ENCODE measurements at regions of chr2 and their contacts with region 1.

Region 1: GRCh38 chr2:192162392-192163042 is 32.2 kb downstream of the TMEFF2 start:
- DNase-seq: peak; percentile 66 to 87
- H3K4me3 ChIP-seq: no peak overlapping the region
- H3K4me1 ChIP-seq: no peaks in the 10 kb centered on the region
- H3K27me3 ChIP-seq: no peaks in the 10 kb centered on the region

Region 2: DNA sequence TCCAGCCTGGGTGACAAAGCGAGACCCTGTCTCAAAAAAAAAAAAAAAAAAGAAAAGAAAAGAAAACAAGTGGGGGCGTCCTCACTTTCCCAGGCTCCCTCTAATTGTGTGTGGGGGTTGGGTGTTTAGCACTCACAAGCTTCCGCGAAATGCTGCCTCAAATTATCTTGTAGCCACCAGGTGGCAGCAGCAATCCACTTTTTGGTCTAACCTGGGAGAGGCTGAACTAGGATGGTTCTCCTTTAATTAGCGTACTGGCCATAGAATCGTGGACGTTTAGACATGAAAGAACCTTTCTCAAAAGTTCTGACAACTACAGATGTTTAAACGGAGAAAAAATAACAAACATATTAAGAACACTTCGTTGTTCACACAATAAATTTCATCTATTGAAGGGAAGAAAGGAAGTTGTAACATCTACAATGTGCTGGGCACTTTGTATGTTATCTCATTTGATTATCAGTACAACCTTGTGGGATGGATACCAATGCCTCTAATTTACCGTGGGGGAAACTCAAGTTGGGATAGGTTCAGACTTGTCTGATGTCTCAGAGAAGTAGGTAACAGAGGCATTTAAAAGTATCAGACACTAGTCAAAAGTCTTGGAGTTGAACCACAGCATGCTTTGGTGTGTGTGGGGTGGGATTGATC is 607.3 kb before region 1 on chr2:
- in situ Hi-C with region 1: loop called (anchors 25 kb)
- DNase-seq: peak; percentile 67 to 89
- H3K4me3 ChIP-seq: no peak overlapping the region
- H3K4me1 ChIP-seq: no peaks in the 10 kb centered on the region
- H3K27me3 ChIP-seq: peaks cover 4% of the 10 kb centered on the region; the same call in 1 of the 2 replicates

Region 3: GRCh38 chr2:191811807-191812602 is 350.5 kb before region 1 on chr2:
- in situ Hi-C with region 1: loop called (anchors 5 kb)
- DNase-seq: peak; percentile 73 to 76
- H3K4me3 ChIP-seq: no peak overlapping the region
- H3K4me1 ChIP-seq: no peaks in the 10 kb centered on the region
- H3K27me3 ChIP-seq: no peaks in the 10 kb centered on the region

Measured in HAP-1 (cell line).